Right ventricle myocardium superior (tissue), 1 donor: ENCODE measurements at regions of chr17 and their contacts with region 1.

Region 1: DNA sequence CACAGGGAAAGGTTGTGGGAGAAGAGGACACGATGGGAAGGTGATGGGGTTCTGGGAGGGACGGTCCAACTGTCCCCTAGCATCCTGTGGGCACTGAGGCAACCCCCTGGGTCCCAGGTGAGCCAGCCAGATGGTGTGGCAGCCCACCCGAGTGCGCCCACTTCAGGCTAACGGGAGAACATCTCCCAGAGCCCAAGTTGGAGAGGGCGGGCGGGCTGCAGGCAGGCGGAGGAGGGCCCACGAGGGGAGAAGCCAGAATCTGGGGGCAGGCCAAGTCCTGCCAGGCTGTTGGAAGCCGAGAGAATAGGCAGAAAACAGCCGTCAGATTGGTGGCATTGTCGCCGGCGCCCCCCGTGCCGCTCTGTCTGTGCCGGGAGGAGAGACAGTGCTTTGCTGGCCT is 13.8 kb upstream of the ABCC3 start:
- DNase-seq: no peak
- ATAC-seq: no peak

Region 2: GRCh38 chr17:50482516-50482915 is 138.3 kb before region 1 on chr17:
- intact Hi-C with region 1: loop called (anchors 5 kb)
- DNase-seq: peak; percentile 96
- ATAC-seq: peak; percentile 71

Region 3: GRCh38 chr17:50541716-50542688 is 78.9 kb before region 1 on chr17:
- intact Hi-C with region 1: no loop called
- DNase-seq: peak; percentile 93
- ATAC-seq: peak; percentile 94

Region 4: GRCh38 chr17:50556803-50557202 is 64.1 kb before region 1 on chr17:
- intact Hi-C with region 1: loop called (anchors 2 kb)
- DNase-seq: peak; percentile 71
- ATAC-seq: peak; percentile 23